Transverse colon (tissue), 4 donors: ENCODE measurements at regions of chr9 and their contacts with region 1.

Region 1: DNA sequence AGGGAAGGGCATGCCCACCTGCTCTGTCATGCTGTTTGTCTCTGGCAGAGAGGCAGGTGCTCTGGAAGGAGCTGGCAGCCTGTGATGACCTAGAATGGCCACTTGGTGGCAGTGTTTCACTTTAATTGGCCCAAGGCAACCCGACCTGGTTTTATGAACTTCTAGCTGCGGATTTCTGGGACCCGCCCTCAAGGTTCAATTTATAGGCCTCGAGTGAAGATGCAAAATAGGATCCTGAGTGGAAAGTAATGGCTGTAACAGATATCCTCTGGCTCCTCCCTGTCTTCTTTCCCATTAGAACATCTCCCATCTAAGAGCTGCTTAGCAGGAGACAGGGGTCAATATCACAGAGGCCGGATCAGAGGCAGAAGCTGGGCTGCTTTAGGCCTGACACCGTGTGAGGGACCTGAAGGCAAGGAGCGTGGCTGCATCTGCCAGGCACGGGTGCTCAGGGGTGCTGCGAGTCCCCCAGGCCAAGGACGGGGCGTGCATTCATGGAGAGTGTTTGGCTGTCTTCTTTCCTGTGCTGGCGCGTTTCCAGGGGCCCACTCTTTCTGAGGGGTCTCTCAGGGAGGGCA is 56.7 kb upstream of the SLC28A3 start:
- DNase-seq: peak; percentile 76
- H3K4me3 ChIP-seq: no peak overlapping the region
- H3K27ac ChIP-seq: no peak overlapping the region
- H3K4me1 ChIP-seq: peaks cover 0 to 3% (median 0%) of the 10 kb centered on the region in 4 donors
- H3K27me3 ChIP-seq: peaks cover 4% of the 10 kb centered on the region
- CTCF ChIP-seq: peak; percentile 88 to 96 (median 92)
- EP300 ChIP-seq: no peak
- POLR2A ChIP-seq: no peak

Region 2: DNA sequence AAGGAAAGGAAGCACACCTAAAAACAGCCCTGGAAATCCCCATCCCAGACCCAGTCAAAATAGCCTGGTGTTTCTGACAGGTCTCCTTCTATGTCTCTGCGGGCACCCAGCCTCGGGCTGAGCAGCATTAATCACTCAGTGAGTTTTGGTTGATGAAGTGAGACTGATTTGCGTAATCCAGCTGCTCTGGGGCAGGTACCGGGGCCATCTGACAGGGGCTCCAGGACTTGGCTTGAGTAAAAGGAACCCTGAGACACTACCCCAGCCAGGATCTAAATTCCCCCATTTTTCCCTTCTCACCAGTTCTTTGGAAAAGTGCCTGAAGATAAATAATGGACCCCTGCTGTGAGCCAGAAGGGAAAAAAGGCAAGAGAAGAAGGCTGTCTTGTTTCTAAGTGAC is 57.3 kb before region 1 on chr9:
- in situ Hi-C with region 1: no loop called
- intact Hi-C with region 1: no loop called
- DNase-seq: no peak
- H3K4me3 ChIP-seq: no peak overlapping the region
- H3K27ac ChIP-seq: peak overlapping the region in 2 of 4 donors; percentile 36 to 51
- H3K4me1 ChIP-seq: peaks cover 0 to 10% (median 1%) of the 10 kb centered on the region in 4 donors
- H3K27me3 ChIP-seq: no peaks in the 10 kb centered on the region
- CTCF ChIP-seq: no peak
- EP300 ChIP-seq: no peak
- POLR2A ChIP-seq: no peak

Region 3: GRCh38 chr9:84781458-84781857 is 384.2 kb after region 1 on chr9:
- in situ Hi-C with region 1: loop called in 1 of 4 experiments (anchors 25 kb)
- intact Hi-C with region 1: no loop called
- DNase-seq: no peak
- H3K4me3 ChIP-seq: no peak overlapping the region
- H3K27ac ChIP-seq: no peak overlapping the region
- H3K4me1 ChIP-seq: no peaks in the 10 kb centered on the region
- H3K27me3 ChIP-seq: no peaks in the 10 kb centered on the region
- CTCF ChIP-seq: peak in 2 of 5 experiments; percentile 23 to 24
- EP300 ChIP-seq: no peak
- POLR2A ChIP-seq: no peak

Region 4: DNA sequence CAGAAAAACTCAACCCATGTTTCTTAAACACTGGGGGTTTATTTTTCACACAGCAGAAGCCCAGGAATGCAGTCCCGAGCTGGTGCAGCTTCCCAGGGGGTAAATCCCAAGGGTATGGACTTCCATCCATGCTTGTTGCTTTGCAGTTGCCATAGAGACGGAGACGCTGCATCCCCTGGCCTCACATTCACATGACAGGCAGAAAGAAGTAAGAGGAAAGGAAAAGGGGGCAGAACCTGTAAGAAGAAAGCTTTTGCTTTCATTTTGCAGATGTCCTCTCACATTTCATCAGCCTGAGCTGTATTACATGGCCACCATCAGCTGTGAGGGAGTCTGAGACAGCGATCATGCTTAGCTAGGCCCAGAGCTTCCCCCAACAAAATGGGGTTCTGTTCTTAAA is 1023.5 kb after region 1 on chr9:
- in situ Hi-C with region 1: loop called in 1 of 4 experiments (anchors 25 kb)
- intact Hi-C with region 1: no loop called
- DNase-seq: no peak
- H3K4me3 ChIP-seq: no peak overlapping the region
- H3K27ac ChIP-seq: no peak overlapping the region
- H3K4me1 ChIP-seq: no peaks in the 10 kb centered on the region
- H3K27me3 ChIP-seq: no peaks in the 10 kb centered on the region
- CTCF ChIP-seq: no peak
- EP300 ChIP-seq: no peak
- POLR2A ChIP-seq: no peak

Region 5: GRCh38 chr9:85600675-85601263 is 1203.5 kb after region 1 on chr9:
- in situ Hi-C with region 1: loop called in 2 of 4 experiments (anchors 10 to 25 kb)
- intact Hi-C with region 1: no loop called
- DNase-seq: no peak
- H3K4me3 ChIP-seq: no peak overlapping the region
- H3K27ac ChIP-seq: no peak overlapping the region
- H3K4me1 ChIP-seq: no peaks in the 10 kb centered on the region
- H3K27me3 ChIP-seq: no peaks in the 10 kb centered on the region
- CTCF ChIP-seq: no peak
- EP300 ChIP-seq: no peak
- POLR2A ChIP-seq: no peak

Region 6: DNA sequence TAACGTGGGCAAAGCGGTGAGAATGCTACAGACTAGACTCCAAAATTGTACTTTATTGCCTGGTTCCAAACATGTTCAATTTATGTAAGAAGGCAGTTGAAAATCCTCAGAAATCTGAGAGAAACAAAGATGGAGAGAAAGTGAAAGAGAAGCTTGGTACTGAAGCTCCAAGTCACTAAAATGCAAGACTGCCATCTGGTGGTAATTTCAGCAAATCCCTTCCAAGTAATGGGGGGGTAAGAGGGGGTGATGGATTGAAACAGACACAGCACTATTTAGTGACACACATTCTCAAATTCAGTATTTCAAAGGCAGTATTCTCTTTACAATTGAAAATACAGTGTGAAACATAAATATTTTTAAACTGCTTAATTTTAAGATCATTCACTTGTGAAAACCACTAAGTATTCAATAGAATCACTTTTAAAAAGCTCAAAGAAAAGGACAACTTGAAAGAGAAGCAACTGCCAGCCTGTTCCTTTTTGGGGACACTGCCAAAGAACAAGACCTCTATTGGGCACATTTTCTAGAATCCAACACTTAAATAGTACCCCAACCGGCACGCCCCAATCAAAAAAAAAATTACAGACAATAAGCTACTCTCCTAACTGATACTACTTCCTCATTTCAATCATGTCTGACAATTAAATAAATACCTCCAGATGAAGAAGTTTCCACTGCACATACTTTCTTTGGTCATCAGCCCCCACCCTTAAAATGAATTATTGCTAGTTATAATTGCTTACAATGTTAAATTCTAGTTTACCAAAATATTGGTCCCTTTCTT is 1213.0 kb after region 1 on chr9:
- in situ Hi-C with region 1: loop called in 2 of 4 experiments (anchors 5 to 10 kb)
- intact Hi-C with region 1: loop called (anchors 10 kb)
- DNase-seq: no peak
- H3K4me3 ChIP-seq: peak overlapping the region in 1 of 4 donors; percentile 30
- H3K27ac ChIP-seq: no peak overlapping the region
- H3K4me1 ChIP-seq: peaks cover 0 to 3% (median 0%) of the 10 kb centered on the region in 4 donors
- H3K27me3 ChIP-seq: no peaks in the 10 kb centered on the region
- CTCF ChIP-seq: peak; percentile 65 to 78 (median 70)
- EP300 ChIP-seq: no peak
- POLR2A ChIP-seq: no peak